CD8-positive, alpha-beta T cell (primary cell): ENCODE measurements at regions of chr5 and their contacts with region 1.

Region 1: DNA sequence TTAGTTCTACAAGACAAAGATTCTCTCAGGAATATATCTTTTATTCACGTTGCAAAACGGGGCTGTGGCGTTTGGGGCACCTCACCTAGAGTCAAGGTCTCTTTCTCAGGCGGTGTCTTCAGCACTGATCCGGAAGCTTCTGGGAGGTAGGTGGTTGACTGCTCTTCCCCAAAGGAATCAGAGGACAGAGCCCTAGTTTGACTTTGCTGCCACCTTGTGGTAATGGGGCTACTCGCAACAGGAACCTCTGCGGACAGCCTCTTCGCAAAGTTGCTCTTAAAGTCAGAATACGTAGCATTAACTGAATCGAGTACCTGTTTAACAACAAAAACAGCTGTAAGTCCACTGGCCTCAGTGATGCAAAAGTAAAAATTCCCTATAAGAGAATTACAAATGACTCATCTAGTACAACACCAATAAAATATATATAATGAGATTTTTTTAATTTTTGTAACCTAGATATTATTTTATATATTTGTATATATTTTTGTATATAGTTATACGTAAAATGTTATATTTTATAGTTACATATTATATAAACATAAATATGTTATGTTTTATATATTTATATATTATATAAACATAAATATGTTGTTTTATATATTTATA is 13.3 kb upstream of the GPX8 start:
- DNase-seq: peak; percentile 65 to 90 (median 83)
- ATAC-seq: peak; percentile 92
- H3K4me3 ChIP-seq: no peak overlapping the region
- H3K4me3 Mint-ChIP-seq: peak overlapping the region; percentile 30
- H3K27ac ChIP-seq: no peak overlapping the region
- H3K27ac Mint-ChIP-seq: no peak overlapping the region
- H3K4me1 ChIP-seq: peaks cover 15% of the 10 kb centered on the region
- H3K4me1 Mint-ChIP-seq: peaks cover 13% of the 10 kb centered on the region
- H3K27me3 ChIP-seq: no peaks in the 10 kb centered on the region
- H3K27me3 Mint-ChIP-seq: no peaks in the 10 kb centered on the region
- CTCF ChIP-seq: peak; percentile 98

Region 2: DNA sequence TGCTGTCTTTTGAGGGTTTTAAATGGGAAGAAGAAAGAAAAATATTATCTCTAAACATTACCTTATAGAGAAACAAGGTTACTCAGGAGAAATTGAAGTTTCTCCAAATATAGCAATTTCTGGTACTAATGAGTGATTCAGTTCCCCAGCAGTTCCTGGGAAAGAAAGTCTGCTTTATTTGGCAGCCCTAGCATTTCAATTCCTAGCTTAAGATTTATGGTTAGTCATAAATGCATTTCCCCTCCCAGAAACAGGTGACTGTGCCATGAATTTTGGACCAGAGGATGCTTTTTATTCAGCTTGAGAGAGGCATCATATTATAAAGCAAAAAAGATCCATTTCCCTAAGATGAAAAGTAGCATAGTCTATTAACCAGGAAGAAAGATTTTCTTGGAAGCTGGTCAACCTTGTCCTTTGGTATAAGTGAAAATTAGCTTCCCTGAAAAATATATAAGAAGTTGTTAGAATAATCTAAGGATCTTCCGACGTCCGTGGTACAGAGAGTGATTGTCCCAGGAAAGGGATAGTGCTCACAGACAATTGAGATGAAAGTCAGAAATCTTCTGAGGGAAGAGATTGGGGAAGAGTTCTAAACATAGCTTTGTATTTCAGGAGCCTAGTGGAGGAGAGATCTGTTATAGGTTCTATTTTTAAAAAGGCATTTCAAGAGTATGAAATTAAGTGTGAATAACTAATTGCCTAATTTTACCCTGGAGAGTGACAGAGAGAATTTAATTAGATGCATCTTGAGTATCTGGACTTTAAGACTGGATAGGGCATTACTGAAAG is 326.1 kb before region 1 on chr5:
- CTCF ChIA-PET with region 1: no interaction called
- POLR2A ChIA-PET with region 1: no interaction called
- intact Hi-C with region 1: no loop called
- DNase-seq: no peak
- ATAC-seq: no peak
- H3K4me3 ChIP-seq: no peak overlapping the region
- H3K4me3 Mint-ChIP-seq: no peak overlapping the region
- H3K27ac ChIP-seq: no peak overlapping the region
- H3K27ac Mint-ChIP-seq: no peak overlapping the region
- H3K4me1 ChIP-seq: no peaks in the 10 kb centered on the region
- H3K4me1 Mint-ChIP-seq: no peaks in the 10 kb centered on the region
- H3K27me3 ChIP-seq: no peaks in the 10 kb centered on the region
- H3K27me3 Mint-ChIP-seq: peaks cover 4% of the 10 kb centered on the region
- CTCF ChIP-seq: no peak

Region 3: GRCh38 chr5:54844905-54845566 is 301.6 kb before region 1 on chr5:
- CTCF ChIA-PET with region 1: no interaction called
- POLR2A ChIA-PET with region 1: no interaction called
- intact Hi-C with region 1: no loop called
- DNase-seq: peak in 2 of 9 experiments; percentile 59 to 70
- ATAC-seq: no peak
- H3K4me3 ChIP-seq: no peak overlapping the region
- H3K4me3 Mint-ChIP-seq: peak overlapping the region; percentile 55
- H3K27ac ChIP-seq: no peak overlapping the region
- H3K27ac Mint-ChIP-seq: peak overlapping the region; percentile 15
- H3K4me1 ChIP-seq: peaks cover 3% of the 10 kb centered on the region
- H3K4me1 Mint-ChIP-seq: peaks cover 3% of the 10 kb centered on the region
- H3K27me3 ChIP-seq: no peaks in the 10 kb centered on the region
- H3K27me3 Mint-ChIP-seq: peaks cover 9% of the 10 kb centered on the region
- CTCF ChIP-seq: peak; percentile 78

Region 4: DNA sequence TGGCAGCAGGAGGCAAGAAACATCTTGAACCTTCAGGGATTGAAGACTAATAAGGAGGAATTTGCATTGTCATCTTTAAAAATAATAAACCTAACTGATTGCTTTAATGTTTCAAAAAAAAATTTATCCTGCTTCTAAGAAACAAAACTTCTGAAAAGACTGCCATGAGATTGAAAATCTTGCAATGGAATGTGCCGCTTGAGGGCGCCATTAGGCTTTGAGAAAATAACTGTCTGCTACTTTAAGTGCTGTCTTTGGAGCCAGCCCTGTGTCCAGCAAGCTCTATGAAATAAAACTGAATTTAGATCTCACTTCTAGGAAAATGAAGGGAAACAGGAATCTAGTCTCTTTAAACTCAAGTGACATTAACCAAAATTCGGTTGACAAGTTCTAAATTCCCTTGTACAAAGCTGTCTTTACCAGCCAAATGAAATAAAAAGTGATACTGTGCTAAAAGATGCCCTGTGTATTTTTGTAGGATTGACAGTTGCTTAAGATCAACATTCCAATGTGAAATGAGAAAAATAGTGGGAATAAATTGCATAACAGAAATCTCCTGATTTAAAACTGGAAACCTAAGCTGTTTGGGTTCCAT is 240.6 kb before region 1 on chr5:
- CTCF ChIA-PET with region 1: interaction called, 109 read pairs
- POLR2A ChIA-PET with region 1: no interaction called
- intact Hi-C with region 1: loop called (anchors 1 kb)
- DNase-seq: peak; percentile 42 to 80 (median 70)
- ATAC-seq: peak; percentile 36
- H3K4me3 ChIP-seq: no peak overlapping the region
- H3K4me3 Mint-ChIP-seq: no peak overlapping the region
- H3K27ac ChIP-seq: no peak overlapping the region
- H3K27ac Mint-ChIP-seq: no peak overlapping the region
- H3K4me1 ChIP-seq: no peaks in the 10 kb centered on the region
- H3K4me1 Mint-ChIP-seq: peaks cover 10% of the 10 kb centered on the region
- H3K27me3 ChIP-seq: no peaks in the 10 kb centered on the region
- H3K27me3 Mint-ChIP-seq: peaks cover 6% of the 10 kb centered on the region
- CTCF ChIP-seq: peak; percentile 77

Region 5: DNA sequence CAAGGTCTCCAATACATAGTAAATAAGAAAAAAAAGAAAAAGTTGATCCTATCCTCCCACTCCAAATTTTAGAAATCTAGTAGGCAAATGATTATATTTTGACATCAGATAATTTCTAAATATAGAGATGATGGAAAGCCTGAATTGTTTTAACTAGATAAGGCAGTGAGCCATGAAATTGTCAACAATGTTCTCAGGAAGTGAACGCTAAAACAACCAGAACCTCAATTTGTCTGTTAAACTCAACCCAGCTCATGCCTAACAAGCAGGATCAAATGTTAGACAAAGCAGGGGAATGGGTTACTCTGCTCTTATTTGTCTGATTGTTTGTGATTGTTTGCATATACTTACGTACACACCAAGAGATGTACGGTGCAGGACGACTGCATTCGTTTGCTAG is 210.4 kb before region 1 on chr5:
- CTCF ChIA-PET with region 1: interaction called, 187 read pairs
- POLR2A ChIA-PET with region 1: no interaction called
- intact Hi-C with region 1: no loop called
- DNase-seq: no peak
- ATAC-seq: no peak
- H3K4me3 ChIP-seq: no peak overlapping the region
- H3K4me3 Mint-ChIP-seq: no peak overlapping the region
- H3K27ac ChIP-seq: no peak overlapping the region
- H3K27ac Mint-ChIP-seq: no peak overlapping the region
- H3K4me1 ChIP-seq: no peaks in the 10 kb centered on the region
- H3K4me1 Mint-ChIP-seq: no peaks in the 10 kb centered on the region
- H3K27me3 ChIP-seq: no peaks in the 10 kb centered on the region
- H3K27me3 Mint-ChIP-seq: peaks cover 13% of the 10 kb centered on the region
- CTCF ChIP-seq: no peak

Region 6: DNA sequence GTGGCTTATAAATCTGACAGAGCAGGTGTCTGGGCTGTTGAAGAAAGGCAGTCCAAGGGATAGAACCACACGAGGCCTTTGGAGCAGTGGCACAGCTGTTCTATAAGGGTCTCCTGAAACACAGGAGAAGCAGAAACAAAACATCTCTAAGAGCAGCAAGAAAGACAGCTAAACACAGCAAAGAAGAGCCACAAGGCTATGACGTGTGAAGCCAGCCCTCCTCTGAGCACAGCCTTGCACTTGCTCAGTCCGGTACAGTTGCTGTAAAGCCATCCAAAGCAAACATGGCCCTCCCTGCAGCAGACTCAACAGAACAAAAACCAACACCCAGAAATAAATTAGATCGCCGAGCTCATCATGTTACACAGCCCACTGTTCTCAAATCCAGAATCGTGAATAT is 125.2 kb before region 1 on chr5:
- CTCF ChIA-PET with region 1: interaction called, 14 read pairs
- POLR2A ChIA-PET with region 1: no interaction called
- intact Hi-C with region 1: no loop called
- DNase-seq: peak in 2 of 9 experiments; percentile 48 to 60
- ATAC-seq: peak; percentile 34
- H3K4me3 ChIP-seq: peak overlapping the region in 1 of 2 experiments; percentile 20
- H3K4me3 Mint-ChIP-seq: peak overlapping the region; percentile 35
- H3K27ac ChIP-seq: peak overlapping the region in 1 of 2 experiments; percentile 55
- H3K27ac Mint-ChIP-seq: peak overlapping the region; percentile 68
- H3K4me1 ChIP-seq: peaks cover 23% of the 10 kb centered on the region
- H3K4me1 Mint-ChIP-seq: peaks cover 47% of the 10 kb centered on the region
- H3K27me3 ChIP-seq: no peaks in the 10 kb centered on the region
- H3K27me3 Mint-ChIP-seq: no peaks in the 10 kb centered on the region
- CTCF ChIP-seq: no peak

Region 7: GRCh38 chr5:55072666-55073065 is 74.0 kb before region 1 on chr5:
- CTCF ChIA-PET with region 1: interaction called, 11 read pairs
- POLR2A ChIA-PET with region 1: no interaction called
- intact Hi-C with region 1: loop called in 1 of 2 experiments (anchors 1 kb)
- DNase-seq: peak in 2 of 9 experiments; percentile 53 to 75
- ATAC-seq: peak; percentile 89
- H3K4me3 ChIP-seq: no peak overlapping the region
- H3K4me3 Mint-ChIP-seq: peak overlapping the region; percentile 39
- H3K27ac ChIP-seq: peak overlapping the region; percentile 20 to 65
- H3K27ac Mint-ChIP-seq: peak overlapping the region; percentile 87
- H3K4me1 ChIP-seq: peaks cover 38% of the 10 kb centered on the region
- H3K4me1 Mint-ChIP-seq: peaks cover 39% of the 10 kb centered on the region
- H3K27me3 ChIP-seq: no peaks in the 10 kb centered on the region
- H3K27me3 Mint-ChIP-seq: no peaks in the 10 kb centered on the region
- CTCF ChIP-seq: no peak

Region 8: DNA sequence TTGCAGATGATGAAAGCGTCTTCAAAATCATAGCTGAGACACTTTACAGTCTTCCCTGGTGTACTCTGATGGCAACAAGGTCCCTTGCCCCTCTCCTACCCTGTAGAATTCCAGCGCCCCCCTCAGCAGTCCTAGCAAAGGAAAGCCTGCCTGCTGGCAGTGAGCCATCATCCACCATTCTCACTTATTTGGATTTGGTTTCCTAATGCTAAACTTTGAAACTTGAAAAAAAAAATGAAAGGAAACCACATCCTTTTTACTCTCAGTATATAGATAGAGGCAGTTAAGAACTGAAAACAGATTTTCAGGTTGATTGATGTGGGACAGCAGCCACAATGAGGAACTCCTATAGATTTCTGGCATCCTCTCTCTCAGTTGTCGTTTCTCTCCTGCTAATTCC is 44.3 kb before region 1 on chr5 and contains the start of gene GZMA:
- CTCF ChIA-PET with region 1: interaction called, 15 read pairs
- POLR2A ChIA-PET with region 1: interaction called, 3 read pairs
- intact Hi-C with region 1: loop called in 1 of 2 experiments (anchors 1 kb)
- DNase-seq: peak in 7 of 9 experiments; percentile 12 to 83 (median 56)
- ATAC-seq: peak; percentile 72
- H3K4me3 ChIP-seq: peak within 1 kb of the TSS; percentile 41 to 78
- H3K4me3 Mint-ChIP-seq: peak within 1 kb of the TSS; percentile 80
- H3K27ac ChIP-seq: peak within 1 kb of the TSS; percentile 39 to 70
- H3K27ac Mint-ChIP-seq: peak within 1 kb of the TSS; percentile 86
- H3K4me1 ChIP-seq: peaks cover 55% of the 10 kb centered on the region
- H3K4me1 Mint-ChIP-seq: peaks cover 87% of the 10 kb centered on the region
- H3K27me3 ChIP-seq: no peaks in the 10 kb centered on the region
- H3K27me3 Mint-ChIP-seq: no peaks in the 10 kb centered on the region
- CTCF ChIP-seq: no peak
- total RNA-seq, gene GZMA: 13.4 to 13.6 TPM

Region 9: GRCh38 chr5:55159763-55160492 is 13.3 kb after region 1 on chr5 and contains the start of gene GPX8:
- CTCF ChIA-PET with region 1: interaction called, 20 read pairs
- POLR2A ChIA-PET with region 1: no interaction called
- intact Hi-C with region 1: no loop called
- DNase-seq: peak in 3 of 9 experiments; percentile 32 to 73 (median 64)
- ATAC-seq: peak; percentile 79
- H3K4me3 ChIP-seq: no peak within 1 kb of the TSS
- H3K4me3 Mint-ChIP-seq: no peak within 1 kb of the TSS
- H3K27ac ChIP-seq: no peak within 1 kb of the TSS
- H3K27ac Mint-ChIP-seq: no peak within 1 kb of the TSS
- H3K4me1 ChIP-seq: no peaks in the 10 kb centered on the region
- H3K4me1 Mint-ChIP-seq: no peaks in the 10 kb centered on the region
- H3K27me3 ChIP-seq: no peaks in the 10 kb centered on the region
- H3K27me3 Mint-ChIP-seq: peaks cover 19% of the 10 kb centered on the region
- CTCF ChIP-seq: peak; percentile 73
- total RNA-seq, gene GPX8: not detected